PC-3 (cell line): ENCODE measurements at regions of chr6 and their contacts with region 1.

Region 1: GRCh38 chr6:84967389-84967788 is 203.0 kb upstream of the TBX18 start:
- DNase-seq: peak; percentile 42
- ATAC-seq: no peak
- H3K4me3 ChIP-seq: no peak overlapping the region
- H3K27ac ChIP-seq: no peak overlapping the region
- H3K4me1 ChIP-seq: no peaks in the 10 kb centered on the region
- H3K27me3 ChIP-seq: peaks cover 24% of the 10 kb centered on the region; the same call in 1 of the 2 replicates
- CTCF ChIP-seq: peak; percentile 60

Region 2: GRCh38 chr6:83792846-83793245 is 1174.5 kb before region 1 on chr6:
- CTCF ChIA-PET with region 1: no interaction called
- POLR2A ChIA-PET with region 1: no interaction called
- intact Hi-C with region 1: no loop called
- DNase-seq: no peak
- ATAC-seq: no peak
- H3K4me3 ChIP-seq: no peak overlapping the region
- H3K27ac ChIP-seq: no peak overlapping the region
- H3K4me1 ChIP-seq: no peaks in the 10 kb centered on the region
- H3K27me3 ChIP-seq: peaks cover 7% of the 10 kb centered on the region; the same call in 1 of the 2 replicates
- CTCF ChIP-seq: no peak

Region 3: GRCh38 chr6:84243240-84243639 is 724.1 kb before region 1 on chr6:
- CTCF ChIA-PET with region 1: no interaction called
- POLR2A ChIA-PET with region 1: no interaction called
- intact Hi-C with region 1: loop called (anchors 10 kb)
- DNase-seq: no peak
- ATAC-seq: no peak
- H3K4me3 ChIP-seq: no peak overlapping the region
- H3K27ac ChIP-seq: no peak overlapping the region
- H3K4me1 ChIP-seq: no peaks in the 10 kb centered on the region
- H3K27me3 ChIP-seq: 0 out of 2 replicates have a peak, but pooled peaks cover 2% of the 10 kb centered on the region
- CTCF ChIP-seq: no peak; the same call in 1 of the 2 replicates

Region 4: GRCh38 chr6:84635081-84635761 is 332.2 kb before region 1 on chr6:
- CTCF ChIA-PET with region 1: no interaction called
- POLR2A ChIA-PET with region 1: no interaction called
- intact Hi-C with region 1: no loop called
- DNase-seq: no peak
- ATAC-seq: no peak
- H3K4me3 ChIP-seq: no peak overlapping the region
- H3K27ac ChIP-seq: no peak overlapping the region
- H3K4me1 ChIP-seq: peaks cover 6% of the 10 kb centered on the region
- H3K27me3 ChIP-seq: no peaks in the 10 kb centered on the region
- CTCF ChIP-seq: no peak

Region 5: DNA sequence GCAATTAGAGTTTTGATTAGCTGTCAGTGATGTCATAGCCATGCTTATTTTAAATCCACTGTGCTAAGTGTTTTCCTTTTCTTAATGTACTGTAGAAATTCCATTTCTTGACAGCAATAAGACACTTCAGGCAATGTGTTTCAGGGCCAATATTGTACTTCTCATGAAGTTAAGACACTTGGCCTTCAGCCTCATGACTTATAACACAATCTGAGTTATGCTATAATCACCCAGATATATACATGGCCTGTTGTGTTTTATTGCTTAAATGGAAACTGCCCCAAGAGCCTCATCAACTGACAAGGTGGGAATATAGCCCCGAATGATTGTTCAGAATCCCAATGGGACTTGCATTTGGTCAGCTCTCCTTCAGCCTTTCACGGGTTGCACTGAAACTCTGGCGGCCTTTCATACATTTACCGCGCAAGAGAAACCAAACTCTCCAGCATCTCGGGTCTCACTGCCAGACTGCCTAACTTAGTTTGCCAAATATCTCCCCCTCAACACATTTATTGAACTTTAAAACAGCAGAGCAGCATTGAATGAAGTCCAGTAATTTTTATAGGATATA is 158.8 kb before region 1 on chr6:
- CTCF ChIA-PET with region 1: no interaction called
- POLR2A ChIA-PET with region 1: no interaction called
- intact Hi-C with region 1: no loop called
- DNase-seq: no peak
- ATAC-seq: no peak
- H3K4me3 ChIP-seq: no peak overlapping the region
- H3K27ac ChIP-seq: no peak overlapping the region
- H3K4me1 ChIP-seq: peaks cover 8% of the 10 kb centered on the region
- H3K27me3 ChIP-seq: no peaks in the 10 kb centered on the region
- CTCF ChIP-seq: no peak